ENCODE measurements at regions of chr9 and their contacts with region 1.

Region 1: DNA sequence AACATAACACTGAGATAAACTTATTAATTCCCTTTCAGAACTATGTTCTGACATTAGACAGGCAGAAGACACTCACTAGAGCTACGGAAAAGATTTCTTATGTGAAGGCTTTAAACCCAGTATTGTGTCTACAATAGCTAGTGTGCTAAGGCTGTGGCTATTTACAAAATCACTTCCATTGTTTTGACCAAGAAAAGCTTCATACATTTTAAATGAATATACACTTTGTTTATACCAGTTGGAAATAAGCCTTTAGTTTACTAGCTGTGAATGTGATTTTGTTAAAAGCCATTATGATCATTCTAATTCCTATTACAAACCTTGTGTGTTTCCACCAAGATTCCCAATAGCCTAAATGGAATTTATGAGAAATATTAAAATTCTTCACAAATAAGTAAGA is 83.0 kb downstream of the AGTPBP1 start:
- DNase-seq: no peak
- H3K4me3 ChIP-seq: no peak overlapping the region
- H3K27ac ChIP-seq: no peak overlapping the region
- H3K4me1 ChIP-seq: no peaks in the 10 kb centered on the region
- H3K27me3 ChIP-seq: no peaks in the 10 kb centered on the region
- CTCF ChIP-seq: no peak
- EP300 ChIP-seq: no peak
- POLR2A ChIP-seq: no peak

Region 2: GRCh38 chr9:85510830-85511504 is 147.7 kb before region 1 on chr9:
- intact Hi-C with region 1: no loop called
- DNase-seq: no peak
- H3K4me3 ChIP-seq: no peak overlapping the region
- H3K27ac ChIP-seq: no peak overlapping the region
- H3K4me1 ChIP-seq: no peaks in the 10 kb centered on the region
- H3K27me3 ChIP-seq: no peaks in the 10 kb centered on the region
- CTCF ChIP-seq: no peak
- EP300 ChIP-seq: no peak
- POLR2A ChIP-seq: no peak

Region 3: GRCh38 chr9:85884256-85884655 is 225.5 kb after region 1 on chr9:
- intact Hi-C with region 1: loop called in 1 of 4 experiments (anchors 10 kb)
- DNase-seq: no peak
- H3K4me3 ChIP-seq: no peak overlapping the region
- H3K27ac ChIP-seq: no peak overlapping the region
- H3K4me1 ChIP-seq: no peaks in the 10 kb centered on the region
- H3K27me3 ChIP-seq: no peaks in the 10 kb centered on the region
- CTCF ChIP-seq: no peak
- EP300 ChIP-seq: no peak
- POLR2A ChIP-seq: no peak